ENCODE measurements at regions of chr14 and their contacts with region 1.

Region 1: GRCh38 chr14:75088574-75089373 is 19.3 kb downstream of the ZC2HC1C start:
- DNase-seq: peak in 3 of 6 donors; percentile 32 to 63 (median 37)
- ATAC-seq: peak; percentile 59 to 91 (median 90)
- H3K4me3 ChIP-seq: no peak overlapping the region
- H3K27ac ChIP-seq: no peak overlapping the region
- H3K4me1 ChIP-seq: no peaks in the 10 kb centered on the region
- H3K27me3 ChIP-seq: no peaks in the 10 kb centered on the region
- CTCF ChIP-seq: peak; percentile 36 to 70 (median 58)

Region 2: DNA sequence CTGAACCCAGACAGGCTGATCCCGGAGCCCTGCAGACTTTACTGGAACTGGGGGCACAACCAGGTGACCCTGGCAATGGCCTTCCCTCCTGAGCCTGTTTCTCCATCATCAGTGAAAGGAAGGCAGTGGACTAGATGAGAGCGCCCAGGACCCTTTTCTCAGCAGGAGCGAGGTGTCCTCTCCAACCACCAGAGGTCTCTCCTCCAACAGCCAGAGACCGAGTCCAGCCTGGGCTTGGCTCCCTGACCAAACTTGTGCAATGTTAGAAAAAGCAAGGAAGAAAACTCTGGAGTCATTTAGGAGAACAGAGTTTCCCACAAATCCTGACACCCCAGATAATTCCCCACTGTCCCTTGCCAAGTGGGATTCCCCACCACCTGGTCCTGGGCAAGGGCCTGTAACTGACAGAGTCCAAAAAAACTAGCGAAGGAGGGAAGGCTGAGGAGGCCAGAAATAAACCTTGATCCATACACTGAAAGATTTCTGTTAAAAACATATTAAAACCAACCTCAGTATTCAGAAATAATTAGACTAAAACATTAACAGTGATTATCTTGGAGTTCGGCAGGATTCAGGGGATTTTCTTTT is 174.7 kb before region 1 on chr14:
- intact Hi-C with region 1: loop called in 2 of 3 experiments (anchors 10 kb)
- DNase-seq: peak in 2 of 6 donors; percentile 44 to 57
- ATAC-seq: peak in 3 of 4 donors; percentile 75 to 86 (median 78)
- H3K4me3 ChIP-seq: no peak overlapping the region
- H3K27ac ChIP-seq: no peak overlapping the region
- H3K4me1 ChIP-seq: peaks cover 0 to 3% (median 0%) of the 10 kb centered on the region in 3 donors
- H3K27me3 ChIP-seq: no peaks in the 10 kb centered on the region
- CTCF ChIP-seq: peak; percentile 13 to 38 (median 21)

Region 3: GRCh38 chr14:74945823-74946682 is 142.7 kb before region 1 on chr14:
- intact Hi-C with region 1: loop called in 2 of 3 experiments (anchors 5 kb)
- DNase-seq: peak; percentile 62 to 86 (median 80)
- ATAC-seq: peak; percentile 76 to 91 (median 88)
- H3K4me3 ChIP-seq: no peak overlapping the region
- H3K27ac ChIP-seq: no peak overlapping the region
- H3K4me1 ChIP-seq: peaks cover 0 to 6% (median 6%) of the 10 kb centered on the region in 3 donors
- H3K27me3 ChIP-seq: no peaks in the 10 kb centered on the region
- CTCF ChIP-seq: peak; percentile 82 to 91 (median 87)

Region 4: DNA sequence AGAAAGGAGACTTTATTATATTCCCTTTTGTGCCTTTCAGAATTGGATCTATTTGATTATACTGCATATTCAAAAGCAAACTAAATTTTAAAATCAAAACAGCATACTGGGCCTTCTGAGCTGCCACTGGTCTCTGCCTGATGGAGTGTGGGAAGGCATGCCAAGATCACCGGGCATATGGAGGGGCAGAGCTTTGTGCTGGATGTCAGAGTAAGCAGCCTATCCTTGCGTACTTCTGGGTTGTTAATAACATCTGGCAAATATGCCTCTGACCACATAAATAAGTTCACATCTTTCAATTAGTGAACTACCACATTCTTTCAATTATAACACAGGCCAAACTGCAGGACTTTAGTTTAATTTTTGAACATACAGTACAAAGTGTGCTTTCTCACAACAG is 55.8 kb before region 1 on chr14:
- intact Hi-C with region 1: loop called in 1 of 3 experiments (anchors 10 kb)
- DNase-seq: no peak
- ATAC-seq: no peak
- H3K4me3 ChIP-seq: no peak overlapping the region
- H3K27ac ChIP-seq: no peak overlapping the region
- H3K4me1 ChIP-seq: no peaks in the 10 kb centered on the region
- H3K27me3 ChIP-seq: no peaks in the 10 kb centered on the region
- CTCF ChIP-seq: no peak